ENCODE measurements at regions of chr4 and their contacts with region 1.

Region 1: DNA sequence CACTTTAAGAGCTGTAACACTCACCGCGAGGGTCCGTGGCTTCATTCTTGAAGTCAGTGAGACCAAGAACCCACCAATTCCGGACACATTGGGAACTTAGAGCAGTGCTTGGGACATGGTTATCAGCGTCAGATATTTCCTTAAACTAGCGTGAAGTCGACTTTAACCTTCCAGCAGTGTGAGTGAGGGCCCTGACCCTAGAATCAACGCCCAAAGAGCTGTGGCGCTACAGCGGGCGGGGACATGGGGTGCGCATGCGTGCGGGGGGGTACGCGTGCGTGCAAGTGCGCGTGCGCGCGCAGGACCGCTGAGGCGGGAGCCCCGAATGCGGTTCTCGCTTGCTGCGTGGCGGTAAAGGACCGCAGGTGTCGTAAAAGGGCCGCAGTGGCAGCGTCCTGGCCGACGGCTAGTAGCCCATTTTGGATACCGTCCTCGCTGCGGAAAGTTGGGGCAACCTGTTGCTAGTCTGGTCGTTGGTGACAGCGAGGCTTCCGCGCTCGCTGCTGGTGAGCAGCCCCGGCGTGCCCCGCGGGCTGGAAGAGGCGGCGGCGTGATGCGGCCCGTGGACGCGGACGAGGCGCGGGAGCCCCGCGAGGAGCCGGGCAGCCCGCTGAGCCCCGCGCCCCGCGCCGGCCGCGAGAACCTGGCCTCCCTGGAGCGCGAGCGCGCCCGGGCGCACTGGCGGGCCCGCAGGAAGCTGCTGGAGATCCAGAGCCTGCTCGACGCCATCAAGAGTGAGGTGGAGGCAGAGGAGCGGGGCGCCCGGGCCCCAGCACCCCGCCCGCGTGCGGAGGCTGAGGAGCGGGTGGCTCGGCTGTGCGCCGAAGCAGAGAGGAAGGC is 19.8 kb upstream of the S100P start:
- DNase-seq: peak; percentile 89 to 99
- ATAC-seq: peak; percentile 83 to 92 (median 89)
- H3K4me3 ChIP-seq: peak overlapping the region; percentile 46
- H3K4me3 Mint-ChIP-seq: peak overlapping the region; percentile 95
- H3K27ac ChIP-seq: peak overlapping the region; percentile 74
- H3K27ac Mint-ChIP-seq: peak overlapping the region; percentile 96 to 97
- H3K4me1 ChIP-seq: peaks cover 36% of the 10 kb centered on the region
- H3K4me1 Mint-ChIP-seq: peaks cover 38 to 49% of the 10 kb centered on the region in 2 donors
- H3K27me3 ChIP-seq: no peaks in the 10 kb centered on the region
- H3K27me3 Mint-ChIP-seq: no peaks in the 10 kb centered on the region
- CTCF ChIP-seq: no peak

Region 2: DNA sequence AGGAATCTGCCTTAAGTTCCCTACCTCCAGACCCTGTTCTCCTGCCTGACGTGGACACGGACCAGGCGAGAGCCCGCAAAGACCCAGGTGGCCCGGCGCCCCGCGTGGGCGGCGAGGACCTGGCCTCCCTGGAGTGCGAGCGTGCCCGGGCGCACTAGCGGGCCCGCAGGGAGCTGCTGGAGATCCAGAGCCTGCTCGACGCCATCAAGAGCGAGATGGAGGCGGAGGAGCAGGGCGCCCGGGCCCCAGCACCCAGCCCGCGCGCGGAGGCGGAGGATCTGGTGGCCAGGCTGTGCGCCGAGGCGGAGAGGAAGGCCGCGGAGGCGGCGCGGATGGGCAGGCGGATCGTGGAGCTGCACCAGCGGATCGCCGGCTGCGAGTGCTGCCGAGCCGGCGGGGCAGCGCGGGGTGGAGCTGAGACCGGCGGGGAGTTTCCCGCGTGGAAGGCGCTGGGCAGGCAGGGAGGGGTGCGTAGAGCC is 15.2 kb before region 1 on chr4:
- intact Hi-C with region 1: loop called (anchors 2 kb)
- DNase-seq: peak; percentile 60 to 81
- ATAC-seq: peak; percentile 91 to 98 (median 98)
- H3K4me3 ChIP-seq: no peak overlapping the region
- H3K4me3 Mint-ChIP-seq: peak overlapping the region; percentile 69
- H3K27ac ChIP-seq: no peak overlapping the region
- H3K27ac Mint-ChIP-seq: peak overlapping the region in 1 of 2 donors; percentile 64
- H3K4me1 ChIP-seq: peaks cover 21% of the 10 kb centered on the region
- H3K4me1 Mint-ChIP-seq: peaks cover 0 to 12% of the 10 kb centered on the region in 2 donors
- H3K27me3 ChIP-seq: peaks cover 8% of the 10 kb centered on the region
- H3K27me3 Mint-ChIP-seq: peaks cover 22% of the 10 kb centered on the region in 2 donors
- CTCF ChIP-seq: no peak

Region 3: GRCh38 chr4:6695660-6696630 is 22.1 kb after region 1 on chr4:
- intact Hi-C with region 1: loop called (anchors 1 kb)
- DNase-seq: peak; percentile 36 to 87
- ATAC-seq: peak; percentile 70 to 80 (median 79)
- H3K4me3 ChIP-seq: no peak overlapping the region
- H3K4me3 Mint-ChIP-seq: peak overlapping the region; percentile 79
- H3K27ac ChIP-seq: peak overlapping the region; percentile 81
- H3K27ac Mint-ChIP-seq: peak overlapping the region; percentile 97 to 98
- H3K4me1 ChIP-seq: peaks cover 67% of the 10 kb centered on the region
- H3K4me1 Mint-ChIP-seq: peaks cover 59 to 70% of the 10 kb centered on the region in 2 donors
- H3K27me3 ChIP-seq: no peaks in the 10 kb centered on the region
- H3K27me3 Mint-ChIP-seq: no peaks in the 10 kb centered on the region
- CTCF ChIP-seq: peak; percentile 29

Region 4: DNA sequence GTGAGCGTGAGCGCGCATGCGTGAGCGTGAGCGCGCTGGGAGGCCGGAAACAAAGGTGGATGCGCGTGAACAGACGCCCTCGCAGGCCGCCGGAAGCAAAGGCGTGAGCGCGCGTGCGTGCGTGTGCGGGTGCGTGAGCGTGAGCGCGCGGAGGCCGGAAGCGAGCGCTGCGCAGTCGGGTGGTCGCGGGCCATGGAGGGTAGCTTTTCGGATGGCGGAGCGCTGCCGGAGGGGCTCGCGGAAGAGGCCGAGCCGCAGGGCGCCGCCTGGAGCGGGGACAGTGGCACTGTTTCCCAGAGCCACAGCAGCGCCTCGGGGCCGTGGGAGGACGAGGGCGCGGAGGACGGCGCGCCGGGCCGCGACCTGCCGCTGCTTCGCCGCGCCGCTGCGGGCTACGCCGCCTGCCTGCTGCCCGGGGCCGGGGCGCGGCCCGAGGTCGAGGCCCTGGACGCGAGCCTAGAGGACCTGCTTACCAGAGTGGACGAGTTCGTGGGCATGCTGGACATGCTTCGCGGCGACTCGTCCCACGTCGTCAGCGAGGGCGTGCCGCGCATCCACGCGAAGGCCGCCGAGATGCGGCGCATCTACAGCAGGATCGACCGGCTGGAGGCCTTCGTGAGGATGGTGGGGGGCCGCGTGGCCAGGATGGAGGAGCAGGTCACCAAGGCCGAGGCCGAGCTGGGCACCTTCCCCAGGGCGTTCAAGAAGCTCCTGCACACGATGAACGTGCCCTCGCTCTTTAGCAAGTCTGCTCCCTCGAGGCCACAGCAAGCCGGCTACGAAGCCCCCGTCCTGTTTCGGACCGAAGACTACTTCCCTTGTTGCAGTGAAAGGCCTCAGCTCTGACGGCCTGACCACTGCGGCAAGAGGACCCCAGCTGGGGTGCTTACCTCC is 42.4 kb after region 1 on chr4 and contains the start of gene BLOC1S4:
- intact Hi-C with region 1: loop called (anchors 1 kb)
- DNase-seq: peak; percentile 88 to 99
- ATAC-seq: peak; percentile 84 to 94 (median 86)
- H3K4me3 ChIP-seq: peak within 1 kb of the TSS; percentile 81
- H3K4me3 Mint-ChIP-seq: peak within 1 kb of the TSS; percentile 98
- H3K27ac ChIP-seq: peak within 1 kb of the TSS; percentile 83
- H3K27ac Mint-ChIP-seq: peak within 1 kb of the TSS; percentile 98
- H3K4me1 ChIP-seq: peaks cover 27% of the 10 kb centered on the region
- H3K4me1 Mint-ChIP-seq: peaks cover 29 to 32% of the 10 kb centered on the region in 2 donors
- H3K27me3 ChIP-seq: no peaks in the 10 kb centered on the region
- H3K27me3 Mint-ChIP-seq: no peaks in the 10 kb centered on the region
- CTCF ChIP-seq: no peak
- total RNA-seq, gene BLOC1S4: 18.9 to 20.1 (median 20.0) TPM

Region 5: DNA sequence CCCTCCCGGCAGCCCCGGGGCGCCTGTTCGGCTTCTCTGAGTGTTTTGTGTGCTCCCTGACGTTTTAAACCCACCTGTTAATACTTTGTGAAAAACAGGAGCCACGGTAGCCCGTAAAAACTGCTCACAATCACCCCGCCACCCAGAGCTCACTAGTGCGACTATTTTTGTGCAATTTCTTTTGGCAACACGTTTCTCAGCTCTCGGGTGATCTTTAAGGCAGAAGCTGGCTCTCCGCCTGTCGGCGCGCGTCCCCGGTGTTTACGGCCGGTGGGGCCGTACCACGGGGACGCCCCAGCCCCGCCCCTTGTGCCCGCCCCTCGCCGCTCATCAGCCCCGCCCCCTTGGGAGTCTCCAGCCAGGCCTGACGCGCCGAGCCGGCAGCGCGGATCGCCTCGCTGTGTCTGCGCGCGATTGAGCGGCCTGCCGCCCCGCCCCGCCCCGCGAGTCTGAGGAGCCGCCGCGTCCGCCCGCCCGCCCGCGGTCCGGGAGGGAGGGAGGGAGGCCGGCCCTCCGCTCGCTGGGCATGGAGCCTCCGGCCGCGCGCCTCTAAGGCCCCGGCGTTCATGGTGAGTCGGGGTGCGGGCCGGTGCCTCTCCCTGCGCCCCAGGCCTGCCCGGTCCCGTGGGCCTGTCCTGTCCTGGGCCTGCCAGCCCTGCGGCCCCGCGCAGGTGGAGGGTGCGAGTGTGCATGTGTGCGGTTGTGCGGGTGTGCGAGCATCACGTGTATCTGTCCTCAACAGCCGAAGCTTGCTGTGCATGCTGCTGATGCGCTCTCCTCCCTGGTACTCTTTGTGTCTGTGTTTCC is 313.1 kb after region 1 on chr4:
- intact Hi-C with region 1: loop called (anchors 5 kb)
- DNase-seq: peak; percentile 89 to 97
- ATAC-seq: peak; percentile 96 to 99 (median 96)
- H3K4me3 ChIP-seq: peak overlapping the region; percentile 63
- H3K4me3 Mint-ChIP-seq: peak overlapping the region; percentile 97
- H3K27ac ChIP-seq: peak overlapping the region; percentile 62
- H3K27ac Mint-ChIP-seq: peak overlapping the region; percentile 93 to 94
- H3K4me1 ChIP-seq: peaks cover 33% of the 10 kb centered on the region
- H3K4me1 Mint-ChIP-seq: peaks cover 61 to 65% of the 10 kb centered on the region in 2 donors
- H3K27me3 ChIP-seq: no peaks in the 10 kb centered on the region
- H3K27me3 Mint-ChIP-seq: no peaks in the 10 kb centered on the region
- CTCF ChIP-seq: no peak

Measured in natural killer cell (primary cell).